Activated naive CD8-positive, alpha-beta T cell treated with anti-CD3 and anti-CD28 coated beads, Interleukin-2, amount 10 ng/mL, durations not matched to agents 7 days and 5 days (primary cell): ENCODE measurements at regions of chr12 and their contacts with region 1.

Region 1: DNA sequence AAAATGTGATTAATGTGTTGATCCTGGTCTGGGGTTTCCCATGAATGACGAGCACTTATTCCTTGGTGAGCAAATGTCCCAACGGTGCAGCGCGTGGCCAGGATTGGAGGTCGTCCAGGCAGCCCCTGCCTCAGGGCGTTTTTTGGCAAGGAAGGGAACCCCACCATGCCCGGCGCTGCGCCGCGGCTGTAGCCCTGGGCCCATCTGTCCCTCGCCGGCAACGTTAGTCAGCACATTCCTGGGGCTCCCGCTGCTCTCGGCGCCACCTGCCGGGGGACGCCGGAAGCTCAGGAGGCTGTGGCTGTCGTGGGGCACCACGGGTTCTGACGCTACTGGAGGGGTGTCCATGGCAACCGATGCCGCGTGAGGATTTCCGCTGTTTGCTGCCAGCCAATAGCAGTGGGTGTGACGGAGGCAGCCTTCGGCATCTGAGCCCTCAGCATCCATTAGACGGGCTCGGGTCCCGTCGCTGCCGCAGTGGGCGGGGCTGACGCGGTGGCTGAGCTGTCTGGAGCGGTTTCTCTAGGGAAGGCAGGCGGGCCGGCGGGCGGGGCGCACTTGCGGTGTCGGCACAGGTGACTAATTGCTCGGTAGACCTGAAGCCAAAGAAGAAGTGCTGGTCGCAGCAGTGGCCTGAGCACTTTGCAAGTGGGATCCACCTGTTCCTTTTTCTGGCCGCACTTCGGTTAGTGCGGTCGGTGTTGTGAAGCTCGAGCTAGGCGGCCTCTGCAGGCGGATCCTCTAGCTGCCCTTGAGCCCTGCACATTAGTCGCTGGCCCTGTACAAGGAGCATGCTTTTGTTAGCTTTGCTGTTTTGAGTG is 29.5 kb downstream of the RAB35 start:
- DNase-seq: peak; percentile 99
- ATAC-seq: peak; percentile 96
- H3K4me3 Mint-ChIP-seq: peak overlapping the region; percentile 68
- H3K27ac Mint-ChIP-seq: peak overlapping the region; percentile 70
- H3K4me1 Mint-ChIP-seq: peaks cover 20% of the 10 kb centered on the region
- H3K27me3 Mint-ChIP-seq: no peaks in the 10 kb centered on the region

Region 2: DNA sequence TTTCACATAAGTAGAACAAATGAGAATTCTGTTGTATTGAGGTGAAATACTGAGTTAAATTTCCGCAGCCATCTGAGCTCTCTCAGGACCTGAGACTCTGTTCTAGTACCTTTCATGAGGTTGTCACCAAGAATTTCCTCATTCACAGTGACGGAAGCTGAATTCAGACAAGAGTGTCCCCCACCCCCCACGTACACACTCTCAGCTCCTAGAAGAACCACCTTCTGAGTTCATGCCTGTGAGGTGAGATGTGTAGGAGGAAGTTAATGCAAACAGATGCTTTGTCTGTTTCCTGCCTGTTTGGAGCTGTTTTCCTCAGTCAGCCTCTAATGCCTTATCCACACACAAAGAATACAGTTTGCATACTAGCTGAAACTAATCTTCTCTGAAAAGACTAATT is 79.7 kb before region 1 on chr12:
- POLR2A ChIA-PET with region 1: interaction called, 19 read pairs
- DNase-seq: no peak
- ATAC-seq: peak; percentile 85
- H3K4me3 Mint-ChIP-seq: peak overlapping the region; percentile 67
- H3K27ac Mint-ChIP-seq: peak overlapping the region; percentile 90
- H3K4me1 Mint-ChIP-seq: peaks cover 49% of the 10 kb centered on the region
- H3K27me3 Mint-ChIP-seq: no peaks in the 10 kb centered on the region